Activated CD4-positive, alpha-beta memory T cell treated with anti-CD3 and anti-CD28 coated beads for 36 hours (primary cell): ENCODE measurements at regions of chr4 and their contacts with region 1.

Region 1: GRCh38 chr4:176393306-176394013 is 73.7 kb downstream of the SPCS3 start:
- DNase-seq: no peak
- H3K4me3 Mint-ChIP-seq: no peak overlapping the region
- H3K27ac Mint-ChIP-seq: no peak overlapping the region
- H3K4me1 Mint-ChIP-seq: no peaks in the 10 kb centered on the region
- H3K27me3 Mint-ChIP-seq: peaks cover 4% of the 10 kb centered on the region

Region 2: DNA sequence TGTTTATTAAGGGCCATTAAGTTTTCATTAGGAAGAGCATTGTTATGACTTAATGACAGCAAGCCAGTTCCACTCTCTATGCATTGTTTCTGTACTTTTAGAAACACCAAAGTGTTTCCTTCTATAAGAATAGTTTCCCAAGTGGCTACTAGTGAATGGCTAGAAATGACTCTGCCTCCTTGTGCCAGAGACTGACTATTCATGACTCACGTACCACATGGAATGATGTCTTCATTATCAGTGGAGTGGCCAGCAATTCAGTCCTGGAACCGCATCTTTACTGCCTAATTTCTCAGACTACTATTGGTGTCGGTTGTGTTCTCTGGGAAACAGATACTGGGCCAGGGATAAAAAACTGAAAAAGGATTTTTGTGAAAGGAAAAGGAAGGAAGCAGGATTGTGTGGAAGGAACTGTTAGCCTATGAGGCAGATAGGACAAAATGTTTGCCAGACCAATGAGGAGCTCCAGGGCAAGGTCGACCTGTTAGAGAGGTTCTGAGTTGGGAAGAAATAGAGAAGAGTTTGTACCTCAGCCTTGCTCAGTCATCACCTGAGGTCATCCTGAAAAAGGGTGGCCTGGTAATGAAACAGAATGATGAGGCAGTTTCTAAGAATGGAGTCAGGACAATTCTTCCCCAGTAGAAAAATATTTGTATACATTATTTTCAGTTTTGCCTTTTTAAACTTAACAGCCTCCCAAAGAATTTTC is 144.9 kb after region 1 on chr4:
- CTCF ChIA-PET with region 1: no interaction called
- POLR2A ChIA-PET with region 1: no interaction called
- intact Hi-C with region 1: no loop called
- DNase-seq: no peak
- H3K4me3 Mint-ChIP-seq: no peak overlapping the region
- H3K27ac Mint-ChIP-seq: no peak overlapping the region
- H3K4me1 Mint-ChIP-seq: no peaks in the 10 kb centered on the region
- H3K27me3 Mint-ChIP-seq: no peaks in the 10 kb centered on the region

Region 3: GRCh38 chr4:177759716-177760115 is 1366.3 kb after region 1 on chr4:
- CTCF ChIA-PET with region 1: no interaction called
- POLR2A ChIA-PET with region 1: no interaction called
- intact Hi-C with region 1: loop called (anchors 10 kb)
- DNase-seq: no peak
- H3K4me3 Mint-ChIP-seq: no peak overlapping the region
- H3K27ac Mint-ChIP-seq: no peak overlapping the region
- H3K4me1 Mint-ChIP-seq: no peaks in the 10 kb centered on the region
- H3K27me3 Mint-ChIP-seq: no peaks in the 10 kb centered on the region